OCI-LY7 (cell line): ENCODE measurements at regions of chr14 and their contacts with region 1.

Region 1: GRCh38 chr14:50003213-50004031 is 110.5 kb downstream of the ARF6 start:
- DNase-seq: peak; percentile 89
- H3K4me3 ChIP-seq: peak overlapping the region; percentile 67
- H3K27ac ChIP-seq: peak overlapping the region; percentile 93
- H3K4me1 ChIP-seq: peaks cover 86% of the 10 kb centered on the region
- CTCF ChIP-seq: peak; percentile 38

Region 2: DNA sequence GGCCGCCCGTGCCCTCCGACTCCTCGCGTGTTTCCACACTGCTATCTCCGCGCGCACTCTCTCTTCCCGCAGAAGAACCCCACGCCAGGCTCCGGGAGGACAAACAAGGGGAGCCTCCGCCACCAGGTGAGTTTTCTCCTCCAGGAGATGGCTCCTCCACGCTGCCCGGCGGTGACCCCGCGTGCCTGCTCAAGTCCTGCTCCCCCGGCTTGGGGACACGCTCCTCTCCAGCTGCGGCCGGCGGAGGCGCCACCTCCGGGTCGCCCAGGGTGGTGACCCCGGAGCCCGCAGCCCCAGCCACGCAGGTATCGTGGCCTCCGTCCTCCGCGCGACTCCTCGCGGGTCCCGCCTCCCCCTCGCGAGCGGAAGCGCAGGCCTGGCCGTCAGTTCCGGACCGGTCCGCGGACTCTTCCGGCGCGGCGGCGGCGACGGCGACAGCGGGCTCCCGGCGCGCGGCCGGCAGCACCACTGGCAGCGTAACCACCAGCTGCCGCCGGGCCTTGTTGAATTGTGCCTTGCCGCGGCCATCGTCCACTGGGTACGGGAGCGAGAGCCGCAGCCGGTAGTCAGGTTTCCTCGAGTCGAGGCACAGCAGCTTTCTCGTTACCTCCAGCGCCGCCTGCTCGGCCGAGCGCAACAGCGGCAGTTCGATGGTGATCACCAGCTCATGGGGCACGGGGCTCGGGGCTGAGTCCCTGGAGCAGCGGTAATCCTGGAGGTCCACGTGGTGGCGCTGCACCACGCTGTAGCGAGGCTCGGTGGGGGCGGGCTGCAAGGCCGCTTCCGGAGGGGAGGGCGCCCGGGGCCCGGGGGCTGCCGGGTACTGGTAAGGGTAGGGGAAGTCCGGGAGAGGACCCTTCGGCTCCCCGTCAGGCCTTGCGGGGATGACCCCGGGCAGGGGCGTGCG is 369.5 kb before region 1 on chr14:
- CTCF ChIA-PET with region 1: no interaction called
- POLR2A ChIA-PET with region 1: no interaction called
- intact Hi-C with region 1: loop called (anchors 5 kb)
- DNase-seq: peak; percentile 98
- H3K4me3 ChIP-seq: peak overlapping the region; percentile 78
- H3K27ac ChIP-seq: peak overlapping the region; percentile 93
- H3K4me1 ChIP-seq: peaks cover 31% of the 10 kb centered on the region
- CTCF ChIP-seq: peak; percentile 87

Region 3: DNA sequence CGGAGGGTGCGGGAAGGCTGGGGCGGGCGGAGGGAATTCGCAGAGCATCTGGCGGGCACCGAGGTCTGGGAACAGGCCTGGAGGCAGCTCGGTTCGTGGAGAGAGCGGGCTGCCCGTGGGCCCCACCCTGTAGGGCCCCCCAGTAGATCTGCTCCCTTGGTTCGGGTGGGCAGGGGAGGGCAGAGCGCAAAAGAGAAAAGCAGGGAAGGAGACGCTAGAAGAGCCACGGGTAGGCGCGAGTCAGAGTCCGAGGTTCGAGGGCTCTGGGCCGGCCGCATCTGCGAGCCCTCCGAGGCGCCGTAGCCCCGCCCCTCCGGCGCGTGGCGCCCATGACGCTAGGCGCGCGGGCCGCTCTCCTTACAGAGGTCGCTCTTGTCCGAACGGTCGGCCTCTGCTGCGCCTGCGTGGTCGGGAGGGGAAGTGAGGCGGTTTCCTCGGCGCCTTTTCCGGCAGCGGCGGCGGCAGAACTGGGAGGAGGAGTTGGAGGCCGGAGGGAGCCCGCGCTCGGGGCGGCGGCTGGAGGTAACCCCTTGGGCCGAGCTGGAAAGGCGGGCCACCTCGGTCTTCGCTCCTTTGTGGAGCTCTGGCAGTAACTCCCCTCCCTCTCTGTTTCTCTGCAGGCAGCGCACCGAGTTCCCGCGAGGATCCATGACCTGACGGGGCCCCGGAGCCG is 110.7 kb before region 1 on chr14 and contains the start of gene ARF6:
- CTCF ChIA-PET with region 1: interaction called, 3 read pairs
- POLR2A ChIA-PET with region 1: interaction called, 14 read pairs
- intact Hi-C with region 1: loop called (anchors 1 kb)
- DNase-seq: peak; percentile 99
- H3K4me3 ChIP-seq: peak within 1 kb of the TSS; percentile 98
- H3K27ac ChIP-seq: peak within 1 kb of the TSS; percentile 91
- H3K4me1 ChIP-seq: peaks cover 26% of the 10 kb centered on the region
- CTCF ChIP-seq: no peak
- total RNA-seq, gene ARF6: 47.6 and 51.0 TPM in 2 replicates

Region 4: DNA sequence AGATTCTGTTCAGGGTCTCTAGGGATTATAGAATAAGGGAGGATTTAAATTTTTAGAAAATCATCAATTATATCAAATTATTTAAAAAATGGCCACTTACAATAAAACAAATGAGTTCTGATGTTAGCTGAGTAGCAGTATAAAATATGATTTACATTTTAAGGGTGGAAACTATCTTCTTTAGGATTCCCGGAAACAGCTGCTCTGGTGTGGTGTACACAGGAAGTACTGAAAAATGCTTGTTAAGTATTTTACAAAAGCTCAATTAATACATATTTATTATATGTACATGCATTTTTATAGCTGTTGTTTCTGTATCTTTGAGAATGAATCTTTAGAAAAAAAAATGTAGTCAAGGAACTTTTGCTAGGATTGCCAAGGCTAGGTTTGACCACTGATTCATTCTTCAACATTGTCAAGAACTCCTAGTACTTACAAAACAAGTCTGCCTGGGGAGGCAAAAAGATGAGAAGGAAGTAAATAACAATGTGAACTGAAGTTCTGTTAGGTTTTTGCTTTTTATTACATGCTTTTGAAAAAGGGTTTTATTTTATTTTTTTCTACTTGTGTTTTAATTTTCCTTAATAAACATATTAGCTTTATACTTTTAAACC is 62.5 kb before region 1 on chr14:
- CTCF ChIA-PET with region 1: no interaction called
- POLR2A ChIA-PET with region 1: no interaction called
- intact Hi-C with region 1: no loop called
- DNase-seq: peak; percentile 66
- H3K4me3 ChIP-seq: peak overlapping the region; percentile 16
- H3K27ac ChIP-seq: peak overlapping the region; percentile 55
- H3K4me1 ChIP-seq: peaks cover 25% of the 10 kb centered on the region
- CTCF ChIP-seq: no peak

Region 5: DNA sequence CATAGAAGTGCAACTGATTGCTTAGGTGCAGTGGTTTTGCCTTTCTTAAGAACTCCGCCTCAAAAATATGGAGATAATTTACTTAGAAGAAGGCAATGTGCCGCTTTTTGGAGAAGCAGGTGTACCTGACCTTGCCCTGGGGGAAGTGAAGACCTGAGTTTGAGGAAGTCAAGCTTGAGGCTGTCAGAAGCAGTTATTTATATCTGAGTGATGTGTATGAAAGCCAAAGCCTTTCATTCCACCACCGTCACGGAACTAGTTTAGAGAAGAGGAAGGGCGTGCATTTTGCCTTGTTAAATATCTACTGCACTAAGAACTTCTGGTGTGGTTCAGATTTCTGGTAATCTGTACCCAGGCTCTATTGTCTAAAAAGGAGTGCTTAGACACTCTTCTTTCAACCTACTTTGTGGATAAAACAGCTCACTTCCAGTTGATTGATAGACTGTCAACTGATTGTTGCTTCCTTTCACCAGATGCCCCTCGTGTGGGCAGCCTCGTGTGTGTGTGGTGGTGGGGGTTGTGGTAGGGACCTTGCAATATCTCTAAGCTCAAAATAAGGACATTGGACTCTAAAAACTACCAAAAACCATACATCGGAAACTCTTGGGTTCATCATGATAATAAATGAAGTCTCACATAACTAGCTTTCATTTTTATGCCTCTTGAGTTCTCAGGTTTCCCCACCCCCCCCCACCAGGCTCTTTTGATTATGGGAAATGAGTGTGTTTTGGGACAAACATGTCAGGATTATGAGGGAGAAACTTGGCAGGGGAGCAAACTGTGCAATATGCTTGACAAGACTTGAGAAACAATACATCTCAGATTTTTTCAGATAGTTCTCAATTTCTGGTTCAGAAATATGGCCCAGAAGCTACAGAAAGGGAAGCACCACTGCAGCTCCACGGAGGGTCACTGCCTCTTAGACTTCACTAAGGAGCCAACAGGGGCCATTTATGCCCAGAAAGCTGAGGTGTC is 32.0 kb before region 1 on chr14:
- CTCF ChIA-PET with region 1: interaction called, 4 read pairs
- POLR2A ChIA-PET with region 1: interaction called, 261 read pairs
- intact Hi-C with region 1: loop called (anchors 1 kb)
- DNase-seq: peak; percentile 97
- H3K4me3 ChIP-seq: peak overlapping the region; percentile 65
- H3K27ac ChIP-seq: peak overlapping the region; percentile 99
- H3K4me1 ChIP-seq: peaks cover 81% of the 10 kb centered on the region
- CTCF ChIP-seq: no peak

Region 6: GRCh38 chr14:50085570-50086320 is 82.3 kb after region 1 on chr14:
- CTCF ChIA-PET with region 1: no interaction called
- POLR2A ChIA-PET with region 1: interaction called, 3 read pairs
- intact Hi-C with region 1: loop called (anchors 5 kb)
- DNase-seq: peak; percentile 79
- H3K4me3 ChIP-seq: no peak overlapping the region
- H3K27ac ChIP-seq: peak overlapping the region; percentile 21
- H3K4me1 ChIP-seq: peaks cover 47% of the 10 kb centered on the region
- CTCF ChIP-seq: no peak

Region 7: GRCh38 chr14:50351016-50351415 is 347.6 kb after region 1 on chr14:
- CTCF ChIA-PET with region 1: no interaction called
- POLR2A ChIA-PET with region 1: no interaction called
- intact Hi-C with region 1: no loop called
- DNase-seq: no peak
- H3K4me3 ChIP-seq: no peak overlapping the region
- H3K27ac ChIP-seq: no peak overlapping the region
- H3K4me1 ChIP-seq: no peaks in the 10 kb centered on the region
- CTCF ChIP-seq: no peak